BJ (cell line): ENCODE measurements at regions of chr12 and their contacts with region 1.

Region 1: GRCh38 chr12:116381744-116382685 is 104.5 kb upstream of the MED13L start:
- DNase-seq: peak; percentile 93
- H3K4me3 ChIP-seq: 0 out of 2 replicates have a peak overlapping the region, but pooled peaks have one; percentile 15
- H3K27me3 ChIP-seq: no peaks in the 10 kb centered on the region
- CTCF ChIP-seq: no peak

Region 2: DNA sequence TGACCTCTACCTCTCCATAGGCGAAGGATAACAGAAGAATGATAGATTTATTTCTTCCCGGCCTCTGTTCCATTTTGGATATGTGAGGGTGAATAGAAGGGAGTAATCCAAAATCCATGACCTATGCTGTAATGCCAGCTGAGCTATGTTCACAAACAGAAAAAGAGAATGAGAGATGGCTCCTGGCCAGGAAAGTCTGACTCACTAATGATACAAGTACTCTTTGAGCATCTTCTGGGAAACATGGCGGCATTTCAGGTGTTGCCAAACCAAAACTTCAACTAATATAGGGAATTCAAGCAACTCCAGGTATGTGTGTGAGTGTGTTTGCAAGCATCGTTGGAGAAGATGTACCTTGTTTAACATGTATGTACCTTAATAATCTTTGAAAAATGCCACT is 159.7 kb before region 1 on chr12:
- CTCF ChIA-PET with region 1: no interaction called
- POLR2A ChIA-PET with region 1: no interaction called
- DNase-seq: peak; percentile 35
- H3K4me3 ChIP-seq: no peak overlapping the region
- H3K27me3 ChIP-seq: no peaks in the 10 kb centered on the region
- CTCF ChIP-seq: no peak

Region 3: DNA sequence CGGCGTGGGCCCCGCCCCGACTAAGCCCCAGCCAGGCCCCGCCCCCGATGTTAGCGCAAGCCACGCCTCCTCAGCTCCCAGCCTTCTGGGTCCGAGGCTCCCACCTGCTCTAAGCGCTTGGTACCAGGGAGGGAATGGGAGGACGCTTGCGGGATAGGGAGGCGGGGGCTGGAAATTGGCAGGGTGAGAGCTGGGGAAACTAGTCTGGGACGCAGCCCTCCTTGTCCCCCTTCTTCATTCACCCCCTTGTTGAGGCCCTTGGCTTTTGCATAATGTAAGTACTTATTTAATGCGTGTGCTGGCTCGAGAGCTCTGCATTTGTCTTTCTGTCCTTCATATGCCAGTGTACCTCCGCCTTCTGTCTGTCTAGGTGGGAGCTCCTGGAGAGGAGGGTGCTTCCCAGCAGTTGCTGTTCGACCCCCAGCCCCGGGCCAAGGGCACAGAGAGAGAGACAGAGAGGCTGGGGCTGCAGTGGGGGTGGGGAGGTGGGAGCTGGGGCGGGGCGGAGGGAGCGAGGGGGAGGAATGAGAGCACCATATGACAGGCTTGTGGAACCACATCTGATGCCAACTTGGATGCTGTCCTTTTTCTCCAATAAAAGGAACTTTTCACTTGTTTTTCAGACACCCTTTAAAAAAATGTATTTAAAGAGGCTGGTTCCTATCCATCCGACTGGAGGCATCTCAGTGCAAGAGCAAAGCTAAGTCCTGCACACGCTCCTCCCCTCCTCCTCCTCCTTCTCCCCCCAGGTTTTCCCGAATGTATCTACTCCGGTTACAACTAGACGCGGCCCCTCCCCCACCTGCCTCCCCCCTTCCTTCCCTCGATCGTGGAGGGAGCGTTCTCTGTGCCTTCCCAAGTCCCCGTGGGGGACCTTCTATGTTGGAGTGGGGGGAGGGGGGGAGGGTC is 151.6 kb after region 1 on chr12:
- CTCF ChIA-PET with region 1: no interaction called
- POLR2A ChIA-PET with region 1: interaction called, 11 read pairs
- DNase-seq: no peak
- H3K4me3 ChIP-seq: peak overlapping the region; percentile 50
- H3K27me3 ChIP-seq: no peaks in the 10 kb centered on the region
- CTCF ChIP-seq: no peak